ENCODE measurements at regions of chr7 and their contacts with region 1.

Region 1: GRCh38 chr7:131365838-131366237 is 38.2 kb downstream of the MKLN1 start:
- DNase-seq: no peak
- H3K4me3 Mint-ChIP-seq: no peak overlapping the region
- H3K27ac Mint-ChIP-seq: no peak overlapping the region
- H3K4me1 Mint-ChIP-seq: peaks cover 69% of the 10 kb centered on the region
- H3K27me3 Mint-ChIP-seq: no peaks in the 10 kb centered on the region

Region 2: GRCh38 chr7:130961128-130961601 is 404.7 kb before region 1 on chr7:
- intact Hi-C with region 1: loop called (anchors 5 kb)
- DNase-seq: peak; percentile 85
- H3K4me3 Mint-ChIP-seq: peak overlapping the region; percentile 95
- H3K27ac Mint-ChIP-seq: peak overlapping the region; percentile 98
- H3K4me1 Mint-ChIP-seq: peaks cover 34% of the 10 kb centered on the region
- H3K27me3 Mint-ChIP-seq: no peaks in the 10 kb centered on the region

Region 3: DNA sequence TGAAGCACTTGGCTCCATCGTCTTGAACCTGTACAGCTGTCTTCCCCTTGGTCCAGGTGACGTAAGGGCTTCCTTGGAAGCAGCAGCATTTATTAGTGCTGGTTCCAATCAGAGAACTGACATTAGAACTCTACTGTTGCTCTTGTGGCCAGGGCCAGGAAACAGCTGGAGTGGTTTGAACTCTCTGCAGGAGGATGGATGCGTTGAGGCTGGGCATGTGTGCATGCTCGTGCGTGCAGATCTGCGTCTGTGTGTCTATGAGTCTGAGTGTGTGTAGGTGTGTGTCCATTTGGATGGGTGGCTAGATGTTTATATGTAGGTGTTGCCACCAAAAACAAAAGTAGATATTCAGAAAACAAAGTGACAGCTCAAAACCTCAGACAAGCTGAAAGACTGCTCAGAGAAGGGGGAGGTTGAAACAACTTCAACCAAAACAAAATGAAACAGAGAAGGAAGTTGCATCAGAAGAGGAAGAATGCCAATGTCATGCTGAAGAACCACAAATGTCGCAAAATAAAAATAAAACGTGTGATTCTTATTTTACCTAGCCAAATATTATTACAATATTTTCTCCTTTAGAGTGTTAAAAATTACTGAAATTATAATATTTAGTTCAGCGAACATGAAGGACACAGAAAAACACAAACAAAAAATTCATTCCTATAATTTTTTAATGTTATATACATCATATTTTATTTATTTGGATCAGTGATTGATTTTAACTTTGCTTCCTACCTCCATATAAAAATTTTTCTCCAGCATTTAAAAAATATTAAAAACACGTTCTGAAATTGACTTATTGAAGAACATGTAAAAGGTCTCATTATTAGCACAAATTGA is 134.2 kb before region 1 on chr7:
- intact Hi-C with region 1: loop called (anchors 10 kb)
- DNase-seq: peak; percentile 63
- H3K4me3 Mint-ChIP-seq: peak overlapping the region; percentile 59
- H3K27ac Mint-ChIP-seq: peak overlapping the region; percentile 83
- H3K4me1 Mint-ChIP-seq: peaks cover 58% of the 10 kb centered on the region
- H3K27me3 Mint-ChIP-seq: no peaks in the 10 kb centered on the region

Region 4: DNA sequence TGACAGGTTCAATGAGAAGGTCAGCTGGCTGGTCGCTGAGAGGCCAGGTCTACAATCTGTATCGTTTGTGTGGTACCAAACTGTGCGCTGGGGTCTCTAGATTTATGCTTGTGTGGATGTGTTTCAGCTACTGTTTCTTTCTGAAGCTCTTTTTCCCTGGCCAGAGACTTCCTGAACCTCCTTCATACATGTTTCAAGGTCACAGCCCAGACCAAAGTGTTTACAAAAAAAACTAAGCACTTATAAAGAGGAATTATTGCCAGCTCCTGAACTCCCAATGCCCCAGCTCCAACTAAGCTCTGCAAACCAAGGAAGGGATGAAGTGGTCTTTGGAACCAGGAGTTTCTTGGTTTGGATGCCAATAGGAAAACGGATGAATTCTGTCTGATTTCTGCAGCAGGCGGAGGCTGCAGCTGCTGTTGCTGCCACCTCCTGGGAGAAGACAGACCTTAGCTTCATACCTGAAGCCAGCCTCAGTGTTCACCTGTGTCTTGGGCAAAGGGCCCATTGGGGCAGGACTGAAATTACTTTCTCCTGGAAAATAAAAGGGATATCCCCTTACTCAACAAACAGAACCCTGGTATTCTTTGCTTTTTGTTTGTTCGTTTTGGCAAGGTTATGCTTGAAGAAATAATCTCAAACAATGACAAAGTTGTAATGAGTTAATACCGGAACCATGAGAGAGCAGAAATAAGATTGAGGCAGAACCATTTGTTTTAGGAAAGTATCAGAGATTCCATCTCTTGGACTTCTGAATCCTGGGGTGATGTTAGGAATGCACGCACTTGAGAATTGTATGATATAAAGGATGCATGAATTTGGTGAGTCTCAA is 62.7 kb before region 1 on chr7:
- intact Hi-C with region 1: no loop called
- DNase-seq: no peak
- H3K4me3 Mint-ChIP-seq: no peak overlapping the region
- H3K27ac Mint-ChIP-seq: no peak overlapping the region
- H3K4me1 Mint-ChIP-seq: no peaks in the 10 kb centered on the region
- H3K27me3 Mint-ChIP-seq: peaks cover 7% of the 10 kb centered on the region

Region 5: DNA sequence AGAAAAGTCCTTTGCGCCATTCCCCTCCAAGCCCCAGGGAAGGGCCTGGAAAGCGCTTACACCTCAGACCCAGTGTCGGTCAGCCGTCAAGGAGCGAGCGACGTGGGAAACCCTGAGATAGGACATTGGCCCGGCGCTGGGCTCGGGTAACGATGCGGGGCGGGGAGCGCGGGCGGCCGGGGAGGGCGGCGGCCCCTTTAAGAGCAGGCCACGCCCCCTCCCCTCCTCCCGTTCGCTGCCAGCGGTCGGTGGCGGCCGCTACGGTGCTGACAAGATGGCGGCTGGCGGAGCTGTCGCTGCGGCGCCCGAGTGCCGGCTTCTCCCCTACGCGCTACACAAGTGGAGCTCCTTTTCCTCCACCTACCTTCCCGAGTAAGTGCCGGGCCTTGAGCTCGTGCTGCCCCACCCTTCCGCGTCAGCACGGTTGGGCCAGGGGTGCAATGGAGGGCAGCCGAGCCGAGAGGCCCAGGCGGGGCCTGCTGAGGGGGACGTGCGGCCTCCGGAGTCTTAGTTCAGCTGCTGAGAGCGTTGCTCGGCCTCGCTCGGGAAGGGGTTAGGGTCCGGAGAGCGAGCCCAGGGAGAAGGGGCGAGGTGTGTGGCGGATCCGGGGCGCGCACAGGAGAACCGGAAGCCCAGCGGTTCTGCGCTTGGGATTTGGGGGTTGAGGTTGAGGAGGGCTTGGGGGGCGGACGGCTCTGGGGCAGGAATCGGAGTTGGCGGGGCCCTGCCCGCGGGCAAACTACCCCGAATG is 38.0 kb before region 1 on chr7 and contains the start of gene MKLN1:
- intact Hi-C with region 1: loop called (anchors 5 kb)
- DNase-seq: peak; percentile 85
- H3K4me3 Mint-ChIP-seq: peak within 1 kb of the TSS; percentile 94
- H3K27ac Mint-ChIP-seq: peak within 1 kb of the TSS; percentile 95
- H3K4me1 Mint-ChIP-seq: peaks cover 48% of the 10 kb centered on the region
- H3K27me3 Mint-ChIP-seq: no peaks in the 10 kb centered on the region
- total RNA-seq, gene MKLN1: 38.3 and 40.9 TPM in 2 replicates

Region 6: DNA sequence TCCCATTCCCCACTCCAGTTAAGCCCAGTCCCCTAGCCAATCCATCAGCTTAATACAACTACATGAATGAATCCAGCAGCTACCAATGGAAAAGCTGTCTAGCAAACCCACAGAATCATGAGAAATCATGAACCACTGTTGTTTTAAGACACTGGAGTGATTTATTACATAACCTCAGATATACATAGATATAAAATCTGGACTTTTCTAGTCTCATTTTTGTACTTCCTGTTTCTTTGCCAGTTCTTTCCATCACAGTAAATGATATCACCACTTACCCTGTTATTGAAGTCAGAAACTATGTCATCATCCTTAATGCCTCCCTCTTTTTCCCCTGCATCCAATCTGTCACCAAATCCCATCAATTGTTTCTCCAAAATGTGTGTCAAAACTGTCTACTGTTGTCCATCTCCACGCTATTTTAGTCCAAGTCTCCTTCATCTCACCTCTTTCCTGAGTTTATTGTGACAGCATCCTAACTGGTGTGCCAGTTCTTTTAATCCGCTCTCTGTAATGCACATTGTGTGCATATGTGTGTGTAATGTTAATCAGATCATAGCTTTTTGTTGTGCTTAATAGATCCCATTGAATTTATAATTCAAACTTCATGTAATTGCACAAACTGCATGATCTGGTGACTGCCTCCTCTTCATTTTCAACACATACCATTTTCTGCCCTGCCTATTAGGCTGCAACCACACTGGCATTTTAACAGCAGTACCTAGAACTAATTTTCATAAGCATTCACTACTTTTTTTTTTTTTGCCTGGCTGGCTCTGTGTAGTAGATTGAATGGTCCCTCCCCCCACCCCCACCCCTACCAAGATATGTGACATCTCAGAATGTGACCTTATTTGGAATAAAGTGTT is 17.8 kb after region 1 on chr7:
- intact Hi-C with region 1: loop called (anchors 1 kb)
- DNase-seq: no peak
- H3K4me3 Mint-ChIP-seq: no peak overlapping the region
- H3K27ac Mint-ChIP-seq: peak overlapping the region; percentile 4
- H3K4me1 Mint-ChIP-seq: peaks cover 23% of the 10 kb centered on the region
- H3K27me3 Mint-ChIP-seq: no peaks in the 10 kb centered on the region